ENCODE measurements at regions of chr1 and their contacts with region 1.

Region 1: DNA sequence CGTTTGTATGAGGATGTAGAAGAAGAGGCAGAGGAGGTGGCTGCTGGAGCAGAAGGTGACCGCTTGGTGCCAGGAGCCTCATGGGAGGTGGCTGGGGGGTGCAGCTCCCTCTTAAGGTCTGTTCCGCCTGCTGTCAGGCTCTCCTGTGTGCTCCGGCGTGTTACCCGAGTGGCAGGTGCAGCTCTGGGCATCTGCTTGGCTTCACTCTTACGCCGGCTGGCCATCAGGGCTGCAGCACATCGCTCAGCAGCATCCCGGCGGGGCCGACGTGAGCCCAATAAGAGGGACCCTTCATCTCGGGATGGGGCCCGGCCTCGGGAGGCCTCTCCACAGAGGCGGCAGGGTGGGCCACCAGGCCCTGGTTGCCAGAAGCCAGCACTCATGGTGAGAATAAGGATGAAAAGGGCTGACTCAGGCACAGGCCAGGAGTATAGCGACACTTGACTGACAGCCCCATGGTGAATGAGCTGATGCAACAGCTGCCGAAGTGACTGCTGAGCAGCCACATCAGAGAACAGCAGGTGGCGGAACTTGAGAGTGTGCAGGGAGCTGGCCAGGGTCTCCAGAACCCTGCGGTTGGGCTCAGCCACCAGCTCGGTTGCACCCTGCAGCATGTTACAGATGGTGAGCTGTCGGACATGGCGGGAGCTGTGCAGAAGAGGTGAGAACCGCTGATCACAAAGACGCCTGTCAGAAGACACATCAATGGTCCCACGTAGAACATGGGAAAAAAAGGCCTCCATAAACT is 17.5 kb downstream of the LRRC41 start:
- DNase-seq: no peak
- ATAC-seq: no peak
- H3K4me3 ChIP-seq: no peak overlapping the region
- H3K27ac ChIP-seq: no peak overlapping the region
- H3K4me1 ChIP-seq: peaks cover 23% of the 10 kb centered on the region
- H3K27me3 ChIP-seq: no peaks in the 10 kb centered on the region
- CTCF ChIP-seq: no peak

Region 2: DNA sequence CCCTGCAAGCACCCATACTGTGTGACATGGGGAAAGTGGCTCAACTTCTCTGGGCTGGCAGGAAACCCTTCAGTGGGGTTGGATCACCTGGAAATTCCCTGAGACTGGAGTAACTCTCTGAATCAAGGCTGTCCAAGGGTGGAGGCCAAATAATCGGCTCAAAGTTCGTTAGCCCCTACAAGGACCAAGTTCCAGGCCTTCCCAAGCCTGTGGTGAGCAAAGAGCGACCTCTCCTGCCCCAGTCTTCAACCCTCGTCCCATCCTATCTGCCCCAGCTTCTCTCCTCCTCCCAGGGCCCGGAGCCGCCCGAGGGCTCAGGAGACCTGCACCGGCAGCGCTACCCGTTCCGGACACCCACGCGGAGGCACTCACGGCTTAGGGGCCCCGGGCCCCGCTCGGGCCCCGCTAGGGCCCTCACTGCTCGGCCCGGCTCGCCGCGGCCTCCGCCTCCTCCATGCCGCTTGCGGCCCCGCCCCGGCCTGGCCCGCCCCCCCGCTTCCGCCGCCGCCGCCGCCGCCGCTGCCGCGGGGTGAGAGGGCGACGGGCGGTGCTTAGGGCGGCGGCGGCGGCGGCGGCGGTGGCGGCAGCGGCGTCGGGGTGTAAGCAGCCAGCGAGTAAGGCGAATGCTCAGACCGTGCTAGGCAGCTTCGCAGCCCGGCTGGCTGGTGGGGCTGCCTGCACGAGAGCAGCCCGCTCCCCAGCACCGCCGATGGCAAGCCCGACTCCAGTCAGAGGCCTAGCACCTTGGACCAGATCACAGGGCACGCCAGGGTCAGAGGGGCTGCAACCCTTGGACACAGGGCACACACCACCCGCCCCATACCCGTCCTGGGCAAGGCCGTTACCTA is 87.7 kb before region 1 on chr1 and contains the start of gene POMGNT1:
- CTCF ChIA-PET with region 1: no interaction called
- POLR2A ChIA-PET with region 1: no interaction called
- intact Hi-C with region 1: no loop called
- DNase-seq: peak; percentile 65
- ATAC-seq: peak; percentile 90
- H3K4me3 ChIP-seq: peak within 1 kb of the TSS; percentile 95
- H3K27ac ChIP-seq: peak within 1 kb of the TSS; percentile 72
- H3K4me1 ChIP-seq: peaks cover 9% of the 10 kb centered on the region
- H3K27me3 ChIP-seq: no peaks in the 10 kb centered on the region
- CTCF ChIP-seq: peak; percentile 51; the same call in 1 of the 2 replicates
- total RNA-seq, gene POMGNT1: 84.8 and 92.5 TPM in 2 replicates

Region 3: GRCh38 chr1:46333300-46334029 is 47.6 kb after region 1 on chr1:
- CTCF ChIA-PET with region 1: interaction called, 15 read pairs
- POLR2A ChIA-PET with region 1: no interaction called
- intact Hi-C with region 1: no loop called
- DNase-seq: peak; percentile 60
- ATAC-seq: peak; percentile 88
- H3K4me3 ChIP-seq: no peak overlapping the region
- H3K27ac ChIP-seq: no peak overlapping the region
- H3K4me1 ChIP-seq: no peaks in the 10 kb centered on the region
- H3K27me3 ChIP-seq: no peaks in the 10 kb centered on the region
- CTCF ChIP-seq: peak; percentile 64